Heart left ventricle (tissue), 16 donors: ENCODE measurements at regions of chr11 and their contacts with region 1.

Region 1: DNA sequence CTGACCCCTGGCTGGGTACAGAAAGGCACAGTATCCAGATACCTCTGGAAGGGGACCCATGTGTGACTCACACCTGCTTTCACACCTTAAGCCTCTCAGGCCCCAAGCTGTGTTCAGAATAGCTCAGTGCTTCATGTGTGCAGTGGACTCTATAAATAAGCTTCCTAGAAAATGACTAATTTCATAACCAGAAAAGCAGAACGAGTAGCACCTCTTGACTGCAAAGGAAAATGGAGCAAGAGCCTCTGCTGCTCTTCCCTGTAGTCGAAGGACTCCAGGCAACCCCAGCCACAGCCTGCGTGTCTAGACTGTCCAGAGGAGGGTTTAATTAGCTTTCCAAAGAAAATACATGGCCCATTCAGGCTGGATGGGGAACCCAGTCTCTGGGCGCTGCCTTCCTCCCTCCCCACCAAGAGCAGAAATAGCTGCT is 23.1 kb downstream of the PTPN5 start:
- DNase-seq: no peak
- ATAC-seq: peak in 3 of 4 donors; percentile 46 to 65 (median 51)
- H3K4me3 ChIP-seq: no peak overlapping the region
- H3K27ac ChIP-seq: no peak overlapping the region
- H3K4me1 ChIP-seq: peaks cover 0 to 15% (median 0%) of the 10 kb centered on the region in 12 donors
- H3K27me3 ChIP-seq: no peaks in the 10 kb centered on the region
- CTCF ChIP-seq: no peak
- POLR2A ChIP-seq: no peak

Region 2: DNA sequence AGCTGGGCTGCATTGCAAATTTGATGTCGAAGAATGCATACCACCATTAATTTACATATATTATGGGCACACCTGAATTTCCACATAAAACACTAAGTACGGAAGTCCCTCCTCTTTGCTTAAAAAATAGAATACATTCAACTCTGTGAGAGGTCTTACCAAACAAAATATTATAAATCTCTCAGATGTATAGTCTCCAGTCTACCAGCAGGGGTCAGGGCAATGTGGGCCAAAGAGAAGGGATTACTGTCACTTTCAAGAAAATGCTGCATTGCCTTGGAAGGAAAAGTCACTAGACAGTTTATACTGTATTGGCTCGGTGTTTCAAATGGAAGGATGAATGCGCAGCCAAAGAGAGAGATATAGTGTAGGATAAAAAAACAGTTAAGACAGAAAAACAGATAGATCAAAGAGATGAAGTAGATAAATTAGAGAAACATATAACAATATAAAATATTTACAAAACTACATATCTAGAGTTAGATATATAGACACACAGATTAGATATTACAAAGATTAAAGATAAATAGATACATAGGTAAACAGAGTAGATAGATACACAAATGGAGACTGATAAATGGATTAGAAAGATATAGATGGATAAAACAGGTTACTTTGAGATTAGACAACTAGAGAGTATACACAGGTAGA is 776.6 kb before region 1 on chr11:
- intact Hi-C with region 1: loop called in 1 of 10 experiments (anchors 10 kb)
- DNase-seq: no peak
- ATAC-seq: peak in 2 of 4 donors; percentile 47 to 68
- H3K4me3 ChIP-seq: no peak overlapping the region
- H3K27ac ChIP-seq: no peak overlapping the region
- H3K4me1 ChIP-seq: no peaks in the 10 kb centered on the region
- H3K27me3 ChIP-seq: no peaks in the 10 kb centered on the region
- CTCF ChIP-seq: peak; percentile 57 to 86 (median 74)
- POLR2A ChIP-seq: no peak